IMR-90 (cell line): ENCODE measurements at regions of chr1 and their contacts with region 1.

Region 1: DNA sequence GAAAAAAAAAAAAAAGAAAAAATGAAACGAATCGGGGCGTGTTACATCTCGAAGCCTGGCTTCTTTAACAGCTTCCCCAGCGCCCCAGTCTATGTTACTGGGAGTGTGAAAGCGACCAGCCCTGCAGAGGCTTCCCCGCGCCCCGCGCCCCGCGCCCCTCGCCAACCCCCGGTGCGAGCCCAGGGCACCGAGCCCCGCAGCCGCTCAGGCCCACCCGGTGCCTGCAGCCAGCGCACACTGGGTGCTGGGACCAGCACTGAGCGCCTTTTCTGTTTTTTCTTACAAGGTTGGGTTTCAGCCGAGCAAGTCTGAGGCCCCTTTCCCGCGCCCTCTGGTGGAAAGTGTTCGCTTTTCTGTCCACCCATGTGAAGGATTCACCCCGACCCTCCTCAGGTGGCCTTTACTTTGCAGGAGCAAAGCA is 42.1 kb upstream of the ZNF496 start:
- DNase-seq: peak; percentile 32
- ATAC-seq: peak; percentile 73
- H3K4me3 ChIP-seq: no peak overlapping the region
- H3K27ac ChIP-seq: no peak overlapping the region
- H3K4me1 ChIP-seq: 0 out of 2 replicates have a peak, but pooled peaks cover 3% of the 10 kb centered on the region
- H3K27me3 ChIP-seq: no peaks in the 10 kb centered on the region
- CTCF ChIP-seq: peak; percentile 43
- POLR2A ChIP-seq: no peak
- RAD21 ChIP-seq: peak; percentile 17; the same call in 1 of the 2 replicates

Region 2: DNA sequence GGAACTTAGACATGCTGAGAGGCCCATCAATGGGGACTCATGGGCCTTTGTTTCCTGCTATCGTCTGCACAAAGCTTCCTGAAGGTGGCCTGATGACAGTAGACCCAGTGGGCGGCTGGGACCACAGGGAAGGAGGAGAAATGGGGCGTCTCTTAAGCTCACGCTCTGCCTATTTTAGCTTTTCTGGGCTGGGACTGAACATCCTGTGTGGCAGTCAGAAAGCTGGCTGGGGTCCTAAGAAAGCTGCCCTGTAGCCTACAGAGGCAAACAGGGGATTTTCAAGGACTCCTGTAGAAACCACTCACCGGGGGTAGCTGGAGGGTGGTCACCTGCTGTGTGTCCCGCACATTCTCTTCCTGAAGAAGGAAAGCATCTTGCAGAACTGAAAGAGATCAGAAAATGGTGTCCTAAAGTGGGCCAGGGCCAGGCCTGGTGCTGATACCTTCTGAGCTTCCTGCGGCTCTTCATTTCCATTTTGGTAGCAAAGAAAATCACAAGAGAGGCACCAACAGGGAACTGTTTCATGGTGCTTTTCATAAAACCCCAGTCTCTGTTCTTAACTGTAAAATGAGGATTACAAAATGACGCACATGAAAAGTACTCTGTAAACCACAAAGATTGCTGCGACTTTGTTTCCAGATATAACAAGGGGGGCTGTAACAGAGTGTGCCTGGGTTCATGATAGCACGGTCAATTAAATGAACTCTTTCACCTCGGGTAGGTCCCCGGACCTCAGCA is 50.7 kb before region 1 on chr1:
- CTCF ChIA-PET with region 1: no interaction called
- POLR2A ChIA-PET with region 1: no interaction called
- dilution Hi-C with region 1: no loop called
- in situ Hi-C with region 1: loop called (anchors 5 kb)
- intact Hi-C with region 1: no loop called
- DNase-seq: no peak
- ATAC-seq: no peak
- H3K4me3 ChIP-seq: no peak overlapping the region
- H3K27ac ChIP-seq: no peak overlapping the region
- H3K4me1 ChIP-seq: no peaks in the 10 kb centered on the region
- H3K27me3 ChIP-seq: no peaks in the 10 kb centered on the region
- CTCF ChIP-seq: no peak
- POLR2A ChIP-seq: no peak
- RAD21 ChIP-seq: no peak

Region 3: DNA sequence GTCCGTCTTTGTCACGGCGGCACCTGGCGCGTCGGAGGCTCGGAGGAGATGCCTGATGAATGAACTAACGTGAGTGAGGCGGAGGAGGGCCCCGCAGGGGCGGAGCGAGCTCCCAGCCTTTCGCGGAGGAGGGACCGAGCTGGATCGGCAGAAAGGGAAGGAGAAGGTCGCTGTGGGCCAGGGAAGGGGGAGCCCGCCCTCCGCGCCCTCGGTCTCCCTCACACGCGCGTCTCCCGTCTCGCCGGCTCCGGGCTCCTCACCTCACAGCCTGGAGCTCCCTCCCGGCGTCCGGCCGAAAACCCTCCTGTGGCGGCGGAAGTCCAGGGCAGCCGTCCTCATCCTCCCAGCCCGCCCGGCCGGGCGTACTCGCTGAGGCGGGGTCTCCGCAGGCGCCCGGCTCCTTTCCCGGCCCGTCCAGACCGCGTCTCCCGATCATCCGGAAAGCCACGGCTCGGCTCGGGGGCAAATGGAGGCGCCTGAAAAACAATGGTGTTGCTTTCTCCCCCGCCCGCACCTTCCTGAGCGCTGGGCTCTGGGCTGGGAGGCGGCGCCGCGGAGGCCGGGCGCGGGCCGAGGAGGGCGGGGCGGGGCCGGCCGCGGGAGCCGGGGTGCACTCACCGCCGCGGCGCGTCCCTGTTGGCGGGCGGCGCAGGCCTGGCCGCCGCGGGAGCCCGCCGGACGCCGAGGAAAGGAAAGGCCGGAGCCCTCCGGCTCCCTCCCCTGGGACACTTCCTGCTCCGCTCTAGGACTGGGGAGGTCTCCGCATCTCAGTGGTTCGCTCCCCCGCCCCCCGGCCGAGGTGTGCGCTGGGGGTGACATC is 42.3 kb before region 1 on chr1 and contains the start of gene ZNF496:
- CTCF ChIA-PET with region 1: interaction called, 3 read pairs
- POLR2A ChIA-PET with region 1: no interaction called
- dilution Hi-C with region 1: no loop called
- in situ Hi-C with region 1: no loop called
- intact Hi-C with region 1: loop called (anchors 5 kb)
- DNase-seq: peak; percentile 88
- ATAC-seq: peak; percentile 81
- H3K4me3 ChIP-seq: peak within 1 kb of the TSS; percentile 79
- H3K27ac ChIP-seq: peak within 1 kb of the TSS; percentile 96
- H3K4me1 ChIP-seq: peaks cover 9% of the 10 kb centered on the region
- H3K27me3 ChIP-seq: no peaks in the 10 kb centered on the region
- CTCF ChIP-seq: no peak
- POLR2A ChIP-seq: peak; percentile 78
- RAD21 ChIP-seq: no peak; the same call in 1 of the 2 replicates
- total RNA-seq, gene ZNF496: 8.9 and 11.7 TPM in 2 replicates

Region 4: GRCh38 chr1:247390116-247390791 is 16.5 kb after region 1 on chr1:
- CTCF ChIA-PET with region 1: interaction called, 8 read pairs
- POLR2A ChIA-PET with region 1: interaction called, 13 read pairs
- dilution Hi-C with region 1: no loop called
- in situ Hi-C with region 1: no loop called
- intact Hi-C with region 1: no loop called
- DNase-seq: peak; percentile 75
- ATAC-seq: peak; percentile 95
- H3K4me3 ChIP-seq: peak overlapping the region; percentile 23; the same call in 1 of the 2 replicates
- H3K27ac ChIP-seq: peak overlapping the region; percentile 87
- H3K4me1 ChIP-seq: peaks cover 2% of the 10 kb centered on the region; the same call in 1 of the 2 replicates
- H3K27me3 ChIP-seq: no peaks in the 10 kb centered on the region
- CTCF ChIP-seq: peak; percentile 82
- POLR2A ChIP-seq: no peak
- RAD21 ChIP-seq: peak; percentile 63

Region 5: DNA sequence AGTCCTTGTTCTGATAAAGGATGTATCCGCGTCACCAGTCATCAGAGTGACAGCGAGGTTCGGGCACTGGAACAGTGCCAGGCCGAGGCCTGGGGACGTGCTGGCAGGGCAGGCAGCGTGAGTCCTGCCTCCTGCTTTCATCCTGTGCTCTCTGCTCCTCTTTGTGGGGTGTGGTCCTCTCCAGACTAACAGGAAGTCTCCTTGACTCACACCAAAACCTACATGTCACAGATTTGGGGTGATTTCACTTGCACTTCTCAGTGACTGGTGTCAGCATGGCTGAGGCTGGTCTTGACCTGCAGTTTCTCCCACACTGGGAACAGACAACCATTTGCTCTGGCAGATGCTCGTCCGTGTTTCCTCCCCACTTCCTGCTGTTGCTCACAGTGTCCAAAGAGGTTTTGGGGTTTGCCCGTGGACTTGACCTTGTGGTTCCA is 33.5 kb after region 1 on chr1:
- CTCF ChIA-PET with region 1: no interaction called
- POLR2A ChIA-PET with region 1: no interaction called
- dilution Hi-C with region 1: no loop called
- in situ Hi-C with region 1: no loop called
- intact Hi-C with region 1: no loop called
- DNase-seq: no peak
- ATAC-seq: no peak
- H3K4me3 ChIP-seq: no peak overlapping the region
- H3K27ac ChIP-seq: no peak overlapping the region
- H3K4me1 ChIP-seq: no peaks in the 10 kb centered on the region
- H3K27me3 ChIP-seq: no peaks in the 10 kb centered on the region
- CTCF ChIP-seq: no peak
- POLR2A ChIP-seq: no peak
- RAD21 ChIP-seq: no peak

Region 6: GRCh38 chr1:247487057-247487456 is 113.3 kb after region 1 on chr1:
- CTCF ChIA-PET with region 1: no interaction called
- POLR2A ChIA-PET with region 1: no interaction called
- dilution Hi-C with region 1: no loop called
- in situ Hi-C with region 1: no loop called
- intact Hi-C with region 1: loop called (anchors 1 kb)
- DNase-seq: peak; percentile 34
- ATAC-seq: peak; percentile 81
- H3K4me3 ChIP-seq: no peak overlapping the region
- H3K27ac ChIP-seq: no peak overlapping the region
- H3K4me1 ChIP-seq: no peaks in the 10 kb centered on the region
- H3K27me3 ChIP-seq: no peaks in the 10 kb centered on the region
- CTCF ChIP-seq: peak; percentile 47
- POLR2A ChIP-seq: no peak
- RAD21 ChIP-seq: peak; percentile 47

Region 7: DNA sequence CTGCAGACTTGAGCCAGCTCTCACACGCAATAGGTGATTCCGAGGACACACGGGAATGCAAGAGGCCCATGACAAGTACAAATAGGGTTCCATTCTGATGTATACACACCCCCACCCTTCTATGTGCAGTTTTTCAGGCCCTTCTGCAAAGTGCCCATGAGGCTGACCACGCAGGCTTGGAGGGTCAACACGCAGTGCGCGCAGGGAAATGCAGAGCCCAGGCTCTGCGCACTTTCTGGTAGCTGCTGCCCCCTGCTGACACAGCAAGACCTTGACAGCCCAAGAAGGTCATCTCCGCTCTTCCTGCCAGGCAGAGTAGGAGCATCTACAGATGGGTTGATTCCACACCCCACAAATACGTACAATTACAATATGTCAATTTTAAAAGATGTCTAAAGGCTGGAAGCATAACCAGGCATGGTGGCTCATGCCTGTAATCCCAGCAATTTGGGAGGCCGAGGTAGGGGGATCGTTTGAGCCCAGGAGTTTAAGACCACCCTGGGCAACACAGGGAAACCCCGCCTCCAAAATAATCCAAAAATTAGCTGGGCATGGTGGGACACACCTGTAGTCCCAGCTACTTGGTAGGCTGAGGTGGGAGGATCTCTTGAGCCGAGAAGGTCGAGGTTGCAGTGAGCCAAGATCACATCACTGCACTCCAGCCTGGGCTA is 1433.5 kb after region 1 on chr1:
- CTCF ChIA-PET with region 1: no interaction called
- POLR2A ChIA-PET with region 1: no interaction called
- dilution Hi-C with region 1: no loop called
- in situ Hi-C with region 1: no loop called
- intact Hi-C with region 1: loop called (anchors 1 kb)
- DNase-seq: peak; percentile 39
- ATAC-seq: peak; percentile 76
- H3K4me3 ChIP-seq: no peak overlapping the region
- H3K27ac ChIP-seq: no peak overlapping the region
- H3K4me1 ChIP-seq: peaks cover 3% of the 10 kb centered on the region; the same call in 1 of the 2 replicates
- H3K27me3 ChIP-seq: no peaks in the 10 kb centered on the region; the same call in 1 of the 2 replicates
- CTCF ChIP-seq: peak; percentile 64
- POLR2A ChIP-seq: no peak
- RAD21 ChIP-seq: peak; percentile 69